ENCODE measurements at regions of chr6 and their contacts with region 1.

Region 1: GRCh38 chr6:52020945-52021570 is 66.4 kb downstream of the PKHD1 start:
- DNase-seq: peak in 1 of 2 experiments; percentile 21
- H3K4me3 ChIP-seq: no peak overlapping the region
- H3K4me3 Mint-ChIP-seq: no peak overlapping the region
- H3K27ac Mint-ChIP-seq: no peak overlapping the region
- H3K4me1 ChIP-seq: peaks cover 15% of the 10 kb centered on the region
- H3K4me1 Mint-ChIP-seq: peaks cover 12% of the 10 kb centered on the region
- H3K27me3 ChIP-seq: no peaks in the 10 kb centered on the region
- H3K27me3 Mint-ChIP-seq: no peaks in the 10 kb centered on the region
- CTCF ChIP-seq: peak; percentile 55 to 78

Region 2: DNA sequence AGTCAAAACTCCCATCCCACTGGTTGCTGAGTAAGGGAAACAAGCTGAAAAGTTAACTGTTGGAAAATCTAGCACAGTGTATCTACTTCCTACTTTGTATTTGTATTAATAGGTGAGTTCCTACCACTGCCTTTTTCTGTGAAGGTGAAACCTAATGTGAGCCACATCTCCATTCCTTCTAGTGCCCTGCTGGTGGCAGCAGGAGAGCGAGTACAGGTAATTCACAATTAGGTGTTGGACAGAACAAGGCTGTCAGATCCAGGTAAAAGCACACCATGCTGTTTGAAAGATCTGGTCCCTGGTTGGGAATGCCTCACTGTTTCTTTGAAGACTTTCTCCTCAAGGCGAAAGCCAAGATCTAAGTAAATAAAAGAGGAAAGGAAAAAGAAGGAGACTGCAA is 462.0 kb before region 1 on chr6:
- CTCF ChIA-PET with region 1: no interaction called
- POLR2A ChIA-PET with region 1: no interaction called
- intact Hi-C with region 1: loop called (anchors 1 kb)
- DNase-seq: peak; percentile 29 to 37
- H3K4me3 ChIP-seq: no peak overlapping the region
- H3K4me3 Mint-ChIP-seq: no peak overlapping the region
- H3K27ac Mint-ChIP-seq: no peak overlapping the region
- H3K4me1 ChIP-seq: no peaks in the 10 kb centered on the region
- H3K4me1 Mint-ChIP-seq: no peaks in the 10 kb centered on the region
- H3K27me3 ChIP-seq: no peaks in the 10 kb centered on the region
- H3K27me3 Mint-ChIP-seq: peaks cover 12% of the 10 kb centered on the region
- CTCF ChIP-seq: peak; percentile 27 to 54

Measured in Caco-2 (cell line).